Thyroid gland (tissue), 4 donors: ENCODE measurements at regions of chr1 and their contacts with region 1.

Region 1: GRCh38 chr1:167533851-167534300 is 15.5 kb upstream of the CD247 start:
- DNase-seq: peak; percentile 77 to 82
- H3K4me3 ChIP-seq: no peak overlapping the region
- H3K27ac ChIP-seq: no peak overlapping the region
- H3K4me1 ChIP-seq: no peaks in the 10 kb centered on the region
- H3K27me3 ChIP-seq: no peaks in the 10 kb centered on the region
- CTCF ChIP-seq: peak; percentile 69 to 90 (median 82)
- POLR2A ChIP-seq: no peak

Region 2: GRCh38 chr1:167263819-167264464 is 269.9 kb before region 1 on chr1:
- intact Hi-C with region 1: loop called (anchors 10 kb)
- DNase-seq: no peak
- H3K4me3 ChIP-seq: no peak overlapping the region
- H3K27ac ChIP-seq: no peak overlapping the region
- H3K4me1 ChIP-seq: peaks cover 12 to 36% of the 10 kb centered on the region in 2 donors
- H3K27me3 ChIP-seq: no peaks in the 10 kb centered on the region
- CTCF ChIP-seq: no peak
- POLR2A ChIP-seq: no peak

Region 3: DNA sequence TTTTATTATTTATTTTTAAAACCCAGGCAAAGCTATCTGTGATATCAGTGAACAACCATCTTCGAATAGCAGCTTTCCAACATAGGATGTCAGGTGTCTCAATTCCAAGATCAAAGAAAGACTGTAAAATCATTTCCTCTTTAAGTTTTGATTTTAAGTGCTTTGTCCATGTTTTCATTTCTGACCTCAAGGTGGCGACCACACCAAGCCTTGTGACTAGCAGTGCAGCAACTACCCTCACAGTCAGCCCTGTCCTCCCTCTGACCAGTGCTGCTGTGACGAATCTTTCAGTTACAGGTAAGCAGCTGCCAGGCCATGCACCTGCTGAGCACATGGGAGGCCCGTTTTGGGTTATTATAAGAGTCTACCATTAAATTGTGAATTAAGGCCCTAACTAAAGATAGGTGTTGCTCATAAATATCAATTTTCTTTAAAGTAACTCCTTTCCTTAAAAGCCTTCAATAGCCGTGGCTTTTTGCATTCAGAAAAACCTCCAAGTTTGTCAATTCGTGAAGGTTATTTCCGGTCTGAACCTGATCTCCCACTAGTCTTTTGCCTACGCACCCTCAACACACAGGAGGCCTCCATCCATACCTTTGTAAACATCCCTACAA is 132.5 kb before region 1 on chr1:
- intact Hi-C with region 1: loop called (anchors 10 kb)
- DNase-seq: peak; percentile 48 to 55
- H3K4me3 ChIP-seq: no peak overlapping the region
- H3K27ac ChIP-seq: no peak overlapping the region
- H3K4me1 ChIP-seq: no peaks in the 10 kb centered on the region
- H3K27me3 ChIP-seq: no peaks in the 10 kb centered on the region
- CTCF ChIP-seq: peak in 4 of 6 experiments; percentile 29 to 53 (median 52)
- POLR2A ChIP-seq: no peak

Region 4: GRCh38 chr1:167442124-167442848 is 91.6 kb before region 1 on chr1:
- intact Hi-C with region 1: loop called (anchors 5 kb)
- DNase-seq: peak; percentile 81 to 87
- H3K4me3 ChIP-seq: no peak overlapping the region
- H3K27ac ChIP-seq: no peak overlapping the region
- H3K4me1 ChIP-seq: peaks cover 3 to 6% of the 10 kb centered on the region in 2 donors
- H3K27me3 ChIP-seq: no peaks in the 10 kb centered on the region
- CTCF ChIP-seq: peak; percentile 54 to 85 (median 76)
- POLR2A ChIP-seq: no peak